Body of pancreas (tissue), 4 donors: ENCODE measurements at regions of chr22 and their contacts with region 1.

Region 1: GRCh38 chr22:49305214-49305909 is 522.3 kb downstream of the BRD1 start:
- DNase-seq: peak; percentile 58 to 76 (median 66)
- ATAC-seq: peak; percentile 66
- H3K4me3 ChIP-seq: no peak overlapping the region
- H3K27ac ChIP-seq: no peak overlapping the region
- H3K4me1 ChIP-seq: peaks cover 5% of the 10 kb centered on the region
- H3K27me3 ChIP-seq: peaks cover 0 to 13% of the 10 kb centered on the region in 2 donors
- CTCF ChIP-seq: peak; percentile 81 to 97 (median 91)
- POLR2A ChIP-seq: no peak

Region 2: DNA sequence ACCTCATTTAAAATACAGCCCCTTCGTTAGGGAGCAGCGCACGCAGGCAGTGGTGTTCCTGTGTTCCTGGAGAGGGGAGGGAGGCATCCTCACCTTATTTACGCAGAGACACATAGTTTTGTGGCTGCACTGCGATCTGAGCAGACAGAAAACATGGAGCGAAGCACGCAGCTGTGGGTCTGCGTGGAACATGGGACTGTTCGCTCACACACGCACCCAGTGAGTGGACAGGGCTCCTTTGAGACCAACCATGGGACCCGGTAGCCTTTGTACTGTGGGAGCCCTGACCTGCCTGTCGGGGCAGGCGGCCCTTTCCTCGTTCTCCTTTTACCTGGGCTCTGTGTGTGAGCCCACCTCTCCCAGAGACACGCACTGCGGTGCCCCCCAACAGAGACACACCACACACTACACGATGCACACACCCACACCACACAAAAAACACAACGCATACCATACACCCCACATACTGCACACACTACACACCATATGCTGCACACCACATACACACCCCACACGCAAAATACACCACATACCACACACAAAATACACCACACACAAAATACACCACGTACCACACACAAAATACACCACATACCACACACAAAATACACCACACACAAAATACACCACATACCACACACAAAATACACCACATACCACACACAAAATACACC is 723.4 kb before region 1 on chr22:
- intact Hi-C with region 1: loop called (anchors 10 kb)
- DNase-seq: no peak
- ATAC-seq: no peak
- H3K4me3 ChIP-seq: no peak overlapping the region
- H3K27ac ChIP-seq: no peak overlapping the region
- H3K4me1 ChIP-seq: peaks cover 5% of the 10 kb centered on the region
- H3K27me3 ChIP-seq: no peaks in the 10 kb centered on the region
- CTCF ChIP-seq: no peak
- POLR2A ChIP-seq: no peak

Region 3: GRCh38 chr22:49046546-49047361 is 258.6 kb before region 1 on chr22:
- intact Hi-C with region 1: loop called (anchors 5 kb)
- DNase-seq: peak; percentile 49 to 73 (median 60)
- ATAC-seq: peak; percentile 58
- H3K4me3 ChIP-seq: no peak overlapping the region
- H3K27ac ChIP-seq: no peak overlapping the region
- H3K4me1 ChIP-seq: no peaks in the 10 kb centered on the region
- H3K27me3 ChIP-seq: peaks cover 0 to 7% of the 10 kb centered on the region in 2 donors
- CTCF ChIP-seq: peak; percentile 35 to 68 (median 45)
- POLR2A ChIP-seq: no peak

Region 4: DNA sequence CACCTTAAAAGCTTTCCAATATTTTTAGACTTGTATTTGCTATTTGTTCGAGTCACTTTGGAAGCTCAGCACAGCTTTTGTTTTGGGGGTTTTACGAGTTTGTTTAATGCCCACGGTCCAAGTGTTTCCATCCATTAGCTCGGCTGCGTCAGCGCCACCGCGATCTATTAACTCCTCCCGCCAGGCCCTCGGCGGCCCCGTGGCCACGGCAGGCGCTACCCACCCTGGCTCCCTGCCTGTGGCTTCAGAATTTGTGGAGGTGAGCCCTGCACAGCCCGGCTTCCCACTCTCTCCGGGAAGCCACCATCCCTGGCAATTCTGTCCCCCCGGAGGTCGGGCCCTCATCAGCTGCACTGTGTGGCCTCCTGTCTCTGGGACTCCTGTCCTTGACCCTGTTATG is 126.2 kb before region 1 on chr22:
- intact Hi-C with region 1: no loop called
- DNase-seq: no peak
- ATAC-seq: no peak
- H3K4me3 ChIP-seq: no peak overlapping the region
- H3K27ac ChIP-seq: no peak overlapping the region
- H3K4me1 ChIP-seq: no peaks in the 10 kb centered on the region
- H3K27me3 ChIP-seq: no peaks in the 10 kb centered on the region
- CTCF ChIP-seq: no peak
- POLR2A ChIP-seq: no peak

Region 5: GRCh38 chr22:49230194-49230577 is 75.2 kb before region 1 on chr22:
- intact Hi-C with region 1: no loop called
- DNase-seq: no peak
- ATAC-seq: no peak
- H3K4me3 ChIP-seq: no peak overlapping the region
- H3K27ac ChIP-seq: no peak overlapping the region
- H3K4me1 ChIP-seq: no peaks in the 10 kb centered on the region
- H3K27me3 ChIP-seq: no peaks in the 10 kb centered on the region
- CTCF ChIP-seq: no peak
- POLR2A ChIP-seq: no peak

Region 6: DNA sequence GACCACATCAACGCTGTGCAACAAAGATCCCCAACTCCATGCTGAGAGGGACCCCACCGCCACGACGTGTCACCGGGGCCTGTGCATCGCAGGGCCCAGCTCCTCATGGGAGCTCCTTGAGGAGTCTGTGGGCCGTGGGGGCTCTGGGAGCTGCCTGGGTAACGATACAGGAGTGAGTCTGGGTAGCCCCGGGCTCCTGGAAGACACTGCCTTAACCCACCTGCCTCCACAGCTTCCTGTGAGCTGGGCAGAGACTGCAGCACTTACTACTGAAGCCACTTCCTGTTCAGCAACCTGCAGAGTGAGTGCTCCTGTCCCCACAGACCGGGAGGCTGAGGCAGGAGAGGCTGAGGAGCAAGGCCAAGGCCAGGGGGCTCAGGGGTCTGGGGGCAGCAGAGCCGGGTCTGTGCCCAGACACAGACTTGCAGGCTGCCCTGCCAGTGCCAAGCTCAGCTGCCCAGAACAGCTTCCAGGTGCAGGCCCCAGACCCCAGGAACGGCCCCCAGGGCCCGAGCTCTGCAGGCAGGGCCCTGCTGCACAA is 295.6 kb after region 1 on chr22:
- intact Hi-C with region 1: no loop called
- DNase-seq: peak in 1 of 4 donors; percentile 6
- ATAC-seq: no peak
- H3K4me3 ChIP-seq: no peak overlapping the region
- H3K27ac ChIP-seq: no peak overlapping the region
- H3K4me1 ChIP-seq: no peaks in the 10 kb centered on the region
- H3K27me3 ChIP-seq: no peaks in the 10 kb centered on the region
- CTCF ChIP-seq: no peak
- POLR2A ChIP-seq: no peak